ENCODE measurements at regions of chr7 and their contacts with region 1.

Region 1: DNA sequence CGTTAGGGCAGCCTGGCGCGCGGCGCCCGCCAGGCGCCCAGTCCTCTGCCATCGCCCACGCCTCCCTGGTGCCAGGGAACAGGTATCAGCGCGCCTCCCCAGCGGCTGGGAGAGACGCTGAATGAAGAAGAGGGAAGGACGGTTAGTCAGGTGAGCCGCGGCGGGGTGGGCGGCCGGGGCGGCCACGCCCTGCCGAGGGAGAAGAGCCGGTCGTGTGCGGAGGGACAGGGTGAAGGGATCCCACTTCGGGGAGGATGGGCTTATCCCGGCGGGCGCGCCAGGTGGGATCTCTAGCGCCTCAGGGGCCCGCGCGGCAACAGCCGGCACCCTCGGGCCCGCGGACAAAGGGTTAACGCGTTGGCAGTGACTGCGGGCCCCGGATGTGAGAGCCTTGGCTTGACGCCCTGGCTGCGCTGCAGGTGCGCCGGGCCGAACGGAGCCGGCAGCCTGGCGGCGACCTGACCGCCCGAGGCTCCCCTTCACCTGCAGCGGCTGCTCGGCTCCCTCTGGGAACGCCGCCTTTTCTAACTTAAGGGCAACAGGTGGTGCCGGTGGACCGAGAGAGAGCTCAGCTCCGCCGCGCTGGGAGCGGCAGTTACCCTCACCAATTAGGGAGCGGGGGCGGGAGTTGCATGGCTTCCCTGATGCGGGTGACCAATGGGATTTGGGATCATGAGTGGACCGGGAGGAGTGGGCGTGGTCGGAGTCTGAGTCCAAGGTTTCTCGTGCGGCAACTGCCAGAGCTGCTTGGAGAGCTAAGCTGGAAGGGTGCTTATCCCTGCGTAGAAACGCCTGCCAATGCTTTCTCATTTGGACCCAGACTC is at the start of gene ARL4A:
- DNase-seq: peak; percentile 87
- CTCF ChIP-seq: peak; percentile 12

Region 2: DNA sequence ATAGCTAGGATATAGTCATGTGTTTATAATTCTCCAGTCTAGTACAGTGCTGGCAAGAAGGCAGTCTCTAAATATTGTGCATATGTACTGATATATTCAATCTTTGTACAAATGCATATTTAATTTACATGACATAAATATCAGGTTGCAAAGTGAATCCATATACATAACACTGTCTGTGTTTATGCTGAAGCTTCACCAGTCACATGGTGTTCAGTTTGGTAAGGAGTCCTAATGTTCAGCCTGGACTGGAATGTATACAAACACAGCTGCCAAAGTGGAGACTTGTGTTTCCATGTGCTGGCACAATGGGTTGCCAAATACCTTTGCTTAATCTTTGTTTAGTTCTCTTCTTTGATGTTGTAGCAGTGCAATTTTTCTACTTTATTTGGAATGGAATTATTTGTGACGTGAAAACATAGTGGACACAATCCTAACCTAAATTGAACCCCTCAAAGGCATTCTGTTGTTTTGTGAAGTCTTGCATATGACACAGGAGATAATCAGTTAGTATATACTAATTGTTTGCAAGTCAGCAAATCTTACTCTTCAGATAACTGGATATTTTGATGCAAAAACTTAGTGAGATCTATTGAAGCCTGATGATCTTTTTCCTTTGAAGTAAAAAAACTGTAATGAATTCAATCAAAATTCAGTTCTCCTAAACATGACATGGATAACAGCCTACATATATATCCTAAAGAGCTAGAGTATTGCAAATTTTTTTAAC is 16.9 kb before region 1 on chr7:
- CTCF ChIA-PET with region 1: interaction called, 18 read pairs
- POLR2A ChIA-PET with region 1: no interaction called
- DNase-seq: no peak
- CTCF ChIP-seq: no peak

Region 3: DNA sequence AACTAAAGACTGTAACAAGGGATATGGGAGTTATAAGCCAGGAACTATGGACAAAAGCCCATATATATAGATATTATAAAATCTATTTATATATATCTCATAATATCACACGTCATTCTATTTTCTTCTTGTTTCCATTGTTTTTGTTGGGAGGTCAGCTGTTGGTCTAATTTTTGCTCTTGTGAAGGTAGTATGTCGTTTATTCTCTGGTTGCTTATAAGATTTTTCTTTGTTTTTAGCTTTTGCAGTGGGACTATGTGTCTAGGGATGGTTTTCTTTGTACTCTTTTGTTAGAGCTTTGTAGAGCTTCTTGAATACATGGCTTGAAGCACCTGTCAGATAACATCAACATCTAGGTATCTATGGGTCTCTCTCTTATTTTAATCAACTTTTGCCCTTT is 14.3 kb after region 1 on chr7:
- CTCF ChIA-PET with region 1: interaction called, 22 read pairs
- POLR2A ChIA-PET with region 1: no interaction called
- DNase-seq: no peak
- CTCF ChIP-seq: no peak

Region 4: DNA sequence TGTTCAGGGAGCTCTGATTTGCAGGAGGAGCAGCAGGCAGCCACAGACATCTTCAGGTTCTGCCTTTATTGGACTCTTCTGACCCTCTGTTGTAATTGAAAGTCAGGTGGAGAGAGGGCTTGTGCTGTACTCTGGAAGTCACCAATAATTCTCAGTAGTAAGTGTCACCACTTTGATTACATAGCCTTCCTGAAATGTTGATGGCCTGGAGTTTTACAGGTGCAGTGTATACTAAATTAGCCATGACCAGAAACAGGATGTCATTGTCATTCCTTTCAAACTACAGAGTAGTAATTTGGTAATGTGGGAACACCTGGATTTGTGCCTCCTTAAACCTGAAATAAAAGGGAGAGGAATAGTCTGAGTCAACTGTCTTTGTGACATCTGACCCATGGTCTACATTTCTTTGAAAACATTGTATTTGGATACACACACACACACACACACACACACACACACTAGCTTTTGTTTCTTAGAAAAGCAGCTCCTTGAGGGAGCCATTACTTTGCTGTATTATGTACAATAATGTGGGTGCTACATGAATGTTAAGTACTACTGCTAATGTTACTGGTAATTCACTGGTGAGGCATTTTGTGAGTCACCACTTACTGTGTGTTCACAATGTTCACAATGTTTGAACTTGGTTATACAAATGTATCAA is 19.9 kb after region 1 on chr7:
- CTCF ChIA-PET with region 1: interaction called, 12 read pairs
- POLR2A ChIA-PET with region 1: no interaction called
- DNase-seq: no peak
- CTCF ChIP-seq: no peak

Region 5: DNA sequence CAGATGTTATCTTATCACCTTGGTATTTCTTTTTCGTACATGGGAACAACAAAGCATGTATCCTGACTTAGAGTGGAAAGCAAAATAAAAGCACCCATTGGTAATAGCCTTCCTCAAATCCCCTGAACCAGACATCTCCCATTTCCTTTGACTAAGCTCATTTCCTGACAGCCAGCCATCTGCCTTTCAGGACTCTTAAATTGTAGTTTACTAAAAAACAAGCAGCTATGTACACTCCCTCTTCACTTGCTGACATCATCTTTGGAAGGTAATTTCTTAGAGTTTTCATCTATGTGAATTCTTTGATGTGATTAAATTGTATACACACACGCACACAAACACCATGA is 41.1 kb after region 1 on chr7:
- CTCF ChIA-PET with region 1: interaction called, 10 read pairs
- POLR2A ChIA-PET with region 1: no interaction called
- DNase-seq: no peak
- CTCF ChIP-seq: no peak